Motor neuron (in vitro differentiated cells): ENCODE measurements at regions of chr16 and their contacts with region 1.

Region 1: DNA sequence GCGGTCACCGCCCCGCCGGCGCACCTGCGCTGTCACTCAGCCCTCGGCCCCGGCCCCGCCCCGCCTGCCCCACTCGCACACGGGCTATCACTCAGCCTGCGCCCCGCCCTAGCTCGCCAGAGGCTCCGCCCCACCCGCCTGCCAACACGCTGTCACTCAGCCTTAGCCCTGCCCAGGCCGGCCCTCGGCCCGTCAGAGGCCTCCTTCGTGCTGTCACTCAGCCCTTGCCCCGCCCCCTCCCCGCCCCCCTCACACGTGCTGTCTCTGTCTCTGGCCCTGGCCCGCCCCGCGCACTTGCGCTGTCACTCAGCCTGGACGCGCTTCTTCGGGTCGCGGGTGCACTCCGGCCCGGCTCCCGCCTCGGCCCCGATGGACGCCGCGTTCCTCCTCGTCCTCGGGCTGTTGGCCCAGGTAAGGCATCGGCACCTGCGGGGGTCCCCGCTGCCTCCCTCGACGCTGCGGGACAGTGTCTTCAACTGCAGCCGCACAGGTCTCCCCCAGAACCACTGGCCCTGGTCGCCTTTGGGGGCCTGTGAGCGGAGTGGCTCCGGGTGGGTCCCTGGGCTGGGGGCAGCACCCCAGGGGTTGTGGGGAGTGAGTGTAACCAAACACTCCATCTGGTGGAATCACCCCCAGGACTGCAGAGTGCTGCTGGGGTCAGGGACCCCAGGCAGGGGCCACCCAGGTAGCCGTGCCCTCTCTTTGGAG is at the start of gene CDH15:
- ATAC-seq: peak; percentile 76 to 93 (median 91)
- H3K4me3 ChIP-seq: peak within 1 kb of the TSS; percentile 23 to 36 (median 26)
- H3K27ac ChIP-seq: no peak within 1 kb of the TSS
- H3K4me1 ChIP-seq: peaks cover 17 to 22% of the 10 kb centered on the region in 2 donors
- total RNA-seq, gene CDH15: 0.11 to 0.38 (median 0.22) TPM in 6 of 8 experiments, not detected in the others

Region 2: GRCh38 chr16:88442727-88443576 is 728.7 kb before region 1 on chr16:
- in situ Hi-C with region 1: no loop called
- ATAC-seq: peak; percentile 84 to 98 (median 92)
- H3K4me3 ChIP-seq: no peak overlapping the region
- H3K27ac ChIP-seq: no peak overlapping the region
- H3K4me1 ChIP-seq: peaks cover 2 to 3% of the 10 kb centered on the region in 2 donors

Region 3: DNA sequence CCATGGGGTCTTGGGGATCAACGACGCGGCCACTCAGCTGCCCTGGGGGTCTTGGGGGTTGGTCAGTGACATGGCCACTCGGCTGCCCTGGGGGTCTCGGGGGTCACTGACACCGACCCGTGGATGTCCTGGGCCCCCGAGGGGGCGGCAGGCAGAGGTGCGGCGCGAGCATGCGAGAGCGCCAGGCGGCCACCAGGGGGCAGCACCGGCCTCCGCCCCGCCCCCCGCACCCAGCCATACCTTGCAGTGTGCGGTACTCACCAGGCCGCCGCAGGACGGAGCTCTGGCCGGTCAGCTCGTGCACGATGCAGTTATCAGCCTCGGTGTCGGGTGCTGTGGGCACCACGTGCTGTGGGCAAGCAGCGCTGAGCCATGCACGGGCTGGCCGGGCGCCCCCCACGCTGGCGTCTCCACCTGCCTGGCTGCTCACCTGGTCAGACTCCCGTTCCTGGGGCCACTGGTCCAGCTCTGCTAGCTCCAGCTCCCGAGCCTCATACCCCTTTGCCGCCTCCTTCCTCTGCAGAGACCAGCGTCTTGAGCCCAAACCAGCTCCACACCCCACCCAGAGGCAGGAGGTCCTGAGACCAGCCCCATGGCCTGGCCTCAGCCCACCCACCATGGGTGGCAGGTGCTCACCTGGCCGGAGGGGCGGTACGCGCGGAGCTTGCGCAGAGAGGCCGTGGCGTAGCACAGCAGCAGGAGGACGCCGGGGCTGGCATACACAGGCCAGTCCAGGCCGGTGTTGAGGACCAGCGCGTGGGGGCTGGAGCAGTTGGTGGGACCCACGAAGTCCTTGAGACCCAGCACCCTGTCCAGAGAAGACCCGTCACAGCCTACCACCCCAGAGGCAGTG is 434.1 kb before region 1 on chr16:
- in situ Hi-C with region 1: loop called in 1 of 9 experiments (anchors 25 kb)
- ATAC-seq: peak; percentile 79 to 94 (median 89)
- H3K4me3 ChIP-seq: no peak overlapping the region
- H3K27ac ChIP-seq: no peak overlapping the region
- H3K4me1 ChIP-seq: peaks cover 3 to 15% of the 10 kb centered on the region in 2 donors

Region 4: GRCh38 chr16:88811769-88812512 is 359.7 kb before region 1 on chr16 and contains the start of gene APRT:
- in situ Hi-C with region 1: loop called in 1 of 9 experiments (anchors 25 kb)
- ATAC-seq: peak; percentile 62 to 83 (median 74)
- H3K4me3 ChIP-seq: peak within 1 kb of the TSS; percentile 65 to 94 (median 76)
- H3K27ac ChIP-seq: peak within 1 kb of the TSS; percentile 82 to 88
- H3K4me1 ChIP-seq: peaks cover 9 to 21% of the 10 kb centered on the region in 2 donors
- total RNA-seq, gene APRT: 30.2 to 241 (median 65.9) TPM

Region 5: DNA sequence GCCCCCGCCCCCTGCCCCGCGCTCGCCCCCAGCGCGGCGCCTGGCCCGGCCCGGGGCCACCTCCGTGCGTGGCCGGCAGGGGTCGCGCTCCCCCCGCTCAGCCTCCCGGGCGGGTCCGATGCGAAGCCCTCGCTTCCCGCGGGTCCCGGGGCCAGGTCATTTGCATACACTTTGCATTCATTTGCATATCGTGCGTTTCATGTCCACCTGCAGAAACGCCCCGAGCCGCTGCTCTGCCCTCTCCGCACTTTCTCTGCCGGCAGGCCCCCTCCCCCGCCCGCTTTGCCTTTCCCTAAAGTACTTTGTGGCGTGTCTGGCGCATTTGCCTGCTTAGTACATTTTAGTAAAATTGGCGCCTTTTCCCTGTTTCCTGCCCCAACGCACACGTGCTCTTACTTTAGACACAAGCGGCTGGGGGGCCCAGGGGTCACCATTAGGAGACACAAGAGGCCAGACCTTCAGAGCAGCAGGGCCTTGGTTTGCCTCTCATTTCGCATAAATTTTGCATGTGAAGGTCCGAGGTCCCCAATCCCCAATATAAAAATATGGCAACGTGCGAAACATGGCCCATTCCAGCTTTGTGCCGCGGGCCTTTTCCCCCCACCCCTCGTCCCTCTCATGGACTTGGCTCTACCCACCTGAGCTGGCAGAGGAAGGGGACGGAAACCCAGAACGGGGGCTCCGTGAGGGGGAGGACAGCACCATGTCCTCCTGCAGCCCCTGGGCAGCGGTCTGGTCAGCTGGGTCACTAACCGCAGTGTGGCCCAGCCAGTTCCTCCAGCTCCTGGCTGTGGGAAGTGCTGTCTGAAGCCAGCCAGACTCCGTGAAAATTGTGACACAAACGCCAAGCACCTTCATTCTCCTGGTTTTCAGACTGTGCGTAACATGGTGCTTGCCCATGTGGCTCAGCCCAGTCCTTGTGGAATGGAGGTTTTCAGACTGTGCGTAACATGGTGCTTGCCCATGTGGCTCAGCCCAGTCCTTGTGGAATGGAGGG is 229.4 kb before region 1 on chr16:
- in situ Hi-C with region 1: loop called in 1 of 9 experiments (anchors 25 kb)
- ATAC-seq: peak; percentile 52 to 91 (median 71)
- H3K4me3 ChIP-seq: peak overlapping the region; percentile 49 to 80 (median 59)
- H3K27ac ChIP-seq: no peak overlapping the region
- H3K4me1 ChIP-seq: peaks cover 3 to 11% of the 10 kb centered on the region in 2 donors

Region 6: GRCh38 chr16:89067677-89068406 is 103.8 kb before region 1 on chr16:
- in situ Hi-C with region 1: no loop called
- ATAC-seq: peak in 3 of 8 experiments; percentile 70 to 83 (median 81)
- H3K4me3 ChIP-seq: no peak overlapping the region
- H3K27ac ChIP-seq: no peak overlapping the region
- H3K4me1 ChIP-seq: peaks cover 11 to 29% of the 10 kb centered on the region in 2 donors

Region 7: GRCh38 chr16:89289428-89290395 is 118.1 kb after region 1 on chr16:
- in situ Hi-C with region 1: no loop called
- ATAC-seq: peak; percentile 68 to 92 (median 76)
- H3K4me3 ChIP-seq: no peak overlapping the region
- H3K27ac ChIP-seq: no peak overlapping the region
- H3K4me1 ChIP-seq: peaks cover 0 to 5% of the 10 kb centered on the region in 2 donors